ENCODE measurements at regions of chr16 and their contacts with region 1.

Region 1: GRCh38 chr16:30902029-30902972 is 5.9 kb downstream of the CTF1 start:
- DNase-seq: peak; percentile 54
- H3K4me3 Mint-ChIP-seq: peak overlapping the region; percentile 94
- H3K27ac Mint-ChIP-seq: peak overlapping the region; percentile 96
- H3K4me1 Mint-ChIP-seq: peaks cover 31% of the 10 kb centered on the region
- H3K27me3 Mint-ChIP-seq: no peaks in the 10 kb centered on the region

Region 2: DNA sequence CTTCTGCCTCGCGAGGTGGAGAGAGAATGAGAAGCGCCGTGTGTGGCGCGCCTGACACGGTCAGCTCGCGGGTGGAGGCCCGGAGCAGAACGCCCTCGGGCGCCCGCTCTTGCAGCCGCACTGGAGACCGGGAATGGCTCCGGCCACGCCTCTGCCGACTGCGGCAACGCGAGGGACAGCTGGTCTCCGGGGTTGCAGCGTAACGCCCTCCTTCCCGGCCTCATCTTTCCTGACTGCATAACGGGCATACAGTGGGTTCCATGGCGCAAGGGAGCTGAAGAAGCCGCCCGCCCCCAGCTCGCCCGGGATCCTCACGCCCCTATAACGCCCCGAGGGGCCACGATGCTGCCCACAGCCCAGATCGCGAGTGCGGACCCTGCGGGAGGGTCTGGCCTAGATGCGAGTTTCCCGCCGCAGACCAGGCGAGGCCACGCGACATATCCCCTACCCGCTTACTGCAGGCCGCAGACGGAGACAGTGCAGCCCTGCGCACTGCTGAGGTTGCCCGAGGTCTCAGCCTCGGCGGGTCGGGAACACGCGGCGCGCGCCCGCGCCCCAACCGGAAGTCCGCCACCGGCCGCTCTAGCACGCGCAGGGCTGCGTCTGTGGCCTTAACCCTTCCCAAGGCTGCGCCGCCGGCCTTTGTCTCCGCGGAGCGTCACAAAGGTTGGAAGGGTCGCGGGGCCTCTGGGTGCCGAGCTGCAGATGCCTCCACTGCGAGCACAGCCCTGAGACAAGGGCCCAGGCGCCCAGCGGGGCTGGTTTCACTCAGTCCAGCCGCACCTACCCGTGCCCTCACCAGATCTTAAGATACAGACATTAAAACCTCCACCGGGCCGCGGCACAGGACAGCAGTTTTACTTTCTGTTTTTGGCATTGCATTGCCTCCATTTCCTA is 27.2 kb before region 1 on chr16:
- intact Hi-C with region 1: loop called (anchors 1 kb)
- DNase-seq: peak; percentile 86
- H3K4me3 Mint-ChIP-seq: peak overlapping the region; percentile 97
- H3K27ac Mint-ChIP-seq: peak overlapping the region; percentile 94
- H3K4me1 Mint-ChIP-seq: peaks cover 23% of the 10 kb centered on the region
- H3K27me3 Mint-ChIP-seq: no peaks in the 10 kb centered on the region

Region 3: DNA sequence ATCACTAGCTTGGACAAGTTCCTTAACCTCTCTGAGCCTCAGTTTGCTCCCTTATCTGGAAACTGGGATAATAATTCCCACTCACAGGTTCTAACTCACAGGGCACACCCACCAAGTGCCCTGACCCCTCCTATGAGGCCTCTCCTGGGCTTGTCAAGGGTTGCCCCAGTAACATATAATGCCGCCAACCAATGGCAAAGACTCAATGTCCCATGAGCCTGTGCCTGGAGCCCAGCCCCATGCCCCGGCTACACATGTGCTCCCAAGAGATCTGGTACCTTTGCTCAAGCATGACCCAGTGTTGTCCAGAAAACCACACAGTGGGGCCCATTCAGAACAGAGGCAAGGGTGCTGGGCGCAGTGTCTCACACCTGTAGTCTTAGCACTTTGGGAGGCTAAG is 12.5 kb after region 1 on chr16:
- intact Hi-C with region 1: no loop called
- DNase-seq: no peak
- H3K4me3 Mint-ChIP-seq: no peak overlapping the region
- H3K27ac Mint-ChIP-seq: no peak overlapping the region
- H3K4me1 Mint-ChIP-seq: no peaks in the 10 kb centered on the region
- H3K27me3 Mint-ChIP-seq: no peaks in the 10 kb centered on the region

Region 4: GRCh38 chr16:30977502-30977901 is 75.2 kb after region 1 on chr16:
- intact Hi-C with region 1: no loop called
- DNase-seq: no peak
- H3K4me3 Mint-ChIP-seq: no peak overlapping the region
- H3K27ac Mint-ChIP-seq: no peak overlapping the region
- H3K4me1 Mint-ChIP-seq: no peaks in the 10 kb centered on the region
- H3K27me3 Mint-ChIP-seq: no peaks in the 10 kb centered on the region

Measured in activated T-helper 1 cell treated with anti-CD3 and anti-CD28 coated beads, Interleukin-12 subunit alpha, Interleukin-12 subunit beta, Interleukin-2, Interleukin-4 antibody, amounts not matched to agents 30 ng/mL and 10 ng/mL and 1 ng/mL, durations not matched to agents 14 hours and 24 hours and 36 hours (primary cell).